CD4-positive, alpha-beta memory T cell (primary cell): ENCODE measurements at regions of chr14 and their contacts with region 1.

Region 1: DNA sequence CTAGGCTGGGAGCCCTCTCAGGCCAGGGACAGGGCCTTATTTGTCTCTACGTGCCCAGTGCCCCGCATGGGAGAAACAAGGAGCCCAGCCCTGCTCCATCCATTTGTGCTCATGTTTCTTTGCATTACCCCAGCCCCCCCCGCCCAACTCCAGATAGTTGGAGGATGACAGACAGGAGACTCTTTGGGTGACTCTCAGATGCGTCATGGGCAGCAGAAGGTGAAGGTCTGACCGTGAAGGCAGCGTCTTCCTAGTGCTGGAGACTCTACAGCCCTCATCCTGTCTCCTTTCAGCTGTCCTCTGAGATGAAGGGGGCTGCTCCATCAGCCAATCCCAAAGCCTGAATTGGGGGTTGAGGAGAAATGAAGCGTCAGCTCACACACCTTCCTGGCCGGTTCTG is 283 bp upstream of the PSMB11 start:
- DNase-seq: no peak
- H3K4me3 ChIP-seq: no peak overlapping the region
- H3K4me3 Mint-ChIP-seq: no peak overlapping the region
- H3K27ac ChIP-seq: no peak overlapping the region
- H3K27ac Mint-ChIP-seq: no peak overlapping the region
- H3K4me1 ChIP-seq: no peaks in the 10 kb centered on the region
- H3K4me1 Mint-ChIP-seq: peaks cover 0 to 1% (median 0%) of the 10 kb centered on the region in 4 donors
- H3K27me3 ChIP-seq: no peaks in the 10 kb centered on the region
- H3K27me3 Mint-ChIP-seq: no peaks in the 10 kb centered on the region

Region 2: GRCh38 chr14:22802860-22803686 is 238.7 kb before region 1 on chr14:
- CTCF ChIA-PET with region 1: no interaction called
- POLR2A ChIA-PET with region 1: no interaction called
- intact Hi-C with region 1: no loop called
- DNase-seq: no peak
- H3K4me3 ChIP-seq: no peak overlapping the region
- H3K4me3 Mint-ChIP-seq: no peak overlapping the region
- H3K27ac ChIP-seq: no peak overlapping the region
- H3K27ac Mint-ChIP-seq: no peak overlapping the region
- H3K4me1 ChIP-seq: no peaks in the 10 kb centered on the region
- H3K4me1 Mint-ChIP-seq: no peaks in the 10 kb centered on the region
- H3K27me3 ChIP-seq: no peaks in the 10 kb centered on the region
- H3K27me3 Mint-ChIP-seq: peaks cover 32 to 33% of the 10 kb centered on the region in 2 donors

Region 3: DNA sequence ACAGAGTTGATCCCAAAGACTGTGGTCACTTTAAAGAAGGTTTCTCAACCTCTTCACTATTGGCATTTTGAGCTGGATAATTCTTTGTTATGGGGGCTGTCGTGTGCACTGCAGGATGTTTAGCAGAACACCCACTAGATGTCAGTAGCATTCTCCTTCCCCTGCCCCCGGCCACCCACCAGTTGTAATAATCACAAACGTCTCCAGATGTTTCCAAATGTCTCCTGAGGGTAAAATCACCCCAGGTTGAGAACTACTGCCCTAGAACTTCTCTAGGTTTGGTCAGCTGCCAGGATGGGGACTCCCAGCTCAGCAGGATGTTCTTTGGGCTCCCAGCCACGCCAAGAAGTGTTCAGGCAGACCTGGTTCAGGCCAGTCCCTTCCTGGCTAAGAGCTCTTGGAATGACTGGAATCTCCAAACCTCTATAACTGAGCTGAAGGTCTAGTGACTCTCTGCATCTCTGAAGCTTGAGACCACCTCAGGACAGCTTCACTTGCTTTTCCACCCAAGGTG is 46.9 kb before region 1 on chr14:
- CTCF ChIA-PET with region 1: interaction called, 13 read pairs
- POLR2A ChIA-PET with region 1: no interaction called
- intact Hi-C with region 1: no loop called
- DNase-seq: peak in 1 of 5 donors; percentile 29
- H3K4me3 ChIP-seq: no peak overlapping the region
- H3K4me3 Mint-ChIP-seq: no peak overlapping the region
- H3K27ac ChIP-seq: no peak overlapping the region
- H3K27ac Mint-ChIP-seq: peak overlapping the region in 2 of 7 donors; percentile 57 to 61
- H3K4me1 ChIP-seq: no peaks in the 10 kb centered on the region
- H3K4me1 Mint-ChIP-seq: no peaks in the 10 kb centered on the region
- H3K27me3 ChIP-seq: no peaks in the 10 kb centered on the region
- H3K27me3 Mint-ChIP-seq: no peaks in the 10 kb centered on the region